Activated T-helper 2 cell treated with anti-CD3 and anti-CD28 coated beads, Interferon-gamma antibody, Interleukin-2, Interleukin-4, amounts not matched to agents 10 μg/mL and 5 μg/mL and 100 μg/mL, durations not matched to agents 14 hours and 24 hours and 36 hours (primary cell): ENCODE measurements at regions of chr5 and their contacts with region 1.

Region 1: GRCh38 chr5:113513384-113514288 is at the start of gene YTHDC2:
- DNase-seq: peak; percentile 82
- H3K4me3 Mint-ChIP-seq: peak within 1 kb of the TSS; percentile 87
- H3K27ac Mint-ChIP-seq: peak within 1 kb of the TSS; percentile 83
- H3K4me1 Mint-ChIP-seq: peaks cover 34% of the 10 kb centered on the region
- H3K27me3 Mint-ChIP-seq: peaks cover 15% of the 10 kb centered on the region
- total RNA-seq, gene YTHDC2: 23.1 and 23.9 TPM in 2 replicates

Region 2: DNA sequence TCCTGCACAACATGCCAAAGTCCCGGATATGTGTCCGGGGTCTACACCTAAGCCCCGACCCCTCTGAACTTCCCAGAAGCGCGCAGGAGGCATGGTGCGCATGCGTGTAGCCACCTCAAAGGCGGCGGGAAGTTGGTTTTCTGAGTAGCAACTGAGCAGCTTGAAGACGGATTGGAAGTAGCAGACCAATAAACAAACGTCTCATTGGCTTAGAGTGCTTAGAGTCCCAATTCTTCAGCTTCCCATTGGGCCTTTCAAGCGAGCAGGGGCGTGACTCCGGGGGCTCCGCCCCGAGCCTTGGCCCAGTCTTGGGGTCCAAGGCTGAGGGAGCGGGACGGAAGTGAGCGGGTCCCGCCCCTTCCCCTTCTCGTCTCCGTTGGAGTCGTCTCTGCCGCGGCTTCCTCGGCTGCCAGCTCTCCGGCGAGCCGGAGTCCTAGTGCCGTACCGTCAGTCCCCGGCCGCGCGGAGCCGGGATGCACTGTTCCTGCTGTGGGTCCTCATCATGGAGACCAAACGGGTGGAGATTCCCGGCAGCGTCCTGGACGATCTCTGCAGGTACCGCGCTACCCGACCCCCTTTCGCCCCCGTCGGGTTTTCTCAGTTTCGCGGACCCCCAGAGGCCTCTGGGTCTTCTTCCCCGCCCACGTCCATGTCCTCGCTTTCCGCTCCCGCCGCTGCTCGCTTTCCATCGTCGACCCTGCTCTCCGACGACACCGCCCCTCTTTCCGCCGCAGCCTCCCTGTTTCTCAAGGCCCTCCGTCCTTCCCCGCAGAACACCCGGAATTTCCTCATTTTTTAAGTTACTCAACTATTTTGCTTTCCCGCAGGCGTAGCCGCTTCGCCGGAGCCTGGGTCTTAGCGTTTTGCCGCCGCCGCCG is 537.0 kb before region 1 on chr5 and contains the start of gene DCP2:
- intact Hi-C with region 1: loop called (anchors 2 kb)
- DNase-seq: peak; percentile 96
- H3K4me3 Mint-ChIP-seq: peak within 1 kb of the TSS; percentile 99
- H3K27ac Mint-ChIP-seq: peak within 1 kb of the TSS; percentile 95
- H3K4me1 Mint-ChIP-seq: peaks cover 39% of the 10 kb centered on the region
- H3K27me3 Mint-ChIP-seq: no peaks in the 10 kb centered on the region
- total RNA-seq, gene DCP2: 81.6 and 84.1 TPM in 2 replicates

Region 3: DNA sequence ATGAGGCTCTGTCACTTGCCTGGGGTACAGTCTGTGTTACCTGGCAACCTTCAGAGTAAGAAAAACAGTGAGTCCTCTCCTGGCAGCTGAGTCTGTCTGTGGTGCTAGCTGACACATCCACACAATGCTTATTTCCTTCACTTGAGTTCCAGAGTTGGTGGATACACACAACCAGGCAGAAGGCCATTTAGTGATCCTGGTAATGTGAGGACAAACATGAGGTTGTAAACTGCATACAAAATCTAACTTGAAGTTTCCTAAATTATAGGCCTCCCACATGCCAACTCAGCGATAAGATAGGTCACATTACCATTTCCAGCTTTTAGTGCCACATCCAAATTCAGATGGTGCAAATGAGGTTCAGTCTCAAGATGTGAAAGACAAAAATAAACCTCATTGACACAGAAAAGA is 411.5 kb before region 1 on chr5:
- intact Hi-C with region 1: no loop called
- DNase-seq: no peak
- H3K4me3 Mint-ChIP-seq: no peak overlapping the region
- H3K27ac Mint-ChIP-seq: no peak overlapping the region
- H3K4me1 Mint-ChIP-seq: no peaks in the 10 kb centered on the region
- H3K27me3 Mint-ChIP-seq: peaks cover 2% of the 10 kb centered on the region

Region 4: GRCh38 chr5:113336975-113337374 is 176.7 kb before region 1 on chr5:
- intact Hi-C with region 1: loop called (anchors 2 kb)
- DNase-seq: no peak
- H3K4me3 Mint-ChIP-seq: no peak overlapping the region
- H3K27ac Mint-ChIP-seq: no peak overlapping the region
- H3K4me1 Mint-ChIP-seq: peaks cover 16% of the 10 kb centered on the region
- H3K27me3 Mint-ChIP-seq: peaks cover 22% of the 10 kb centered on the region

Region 5: DNA sequence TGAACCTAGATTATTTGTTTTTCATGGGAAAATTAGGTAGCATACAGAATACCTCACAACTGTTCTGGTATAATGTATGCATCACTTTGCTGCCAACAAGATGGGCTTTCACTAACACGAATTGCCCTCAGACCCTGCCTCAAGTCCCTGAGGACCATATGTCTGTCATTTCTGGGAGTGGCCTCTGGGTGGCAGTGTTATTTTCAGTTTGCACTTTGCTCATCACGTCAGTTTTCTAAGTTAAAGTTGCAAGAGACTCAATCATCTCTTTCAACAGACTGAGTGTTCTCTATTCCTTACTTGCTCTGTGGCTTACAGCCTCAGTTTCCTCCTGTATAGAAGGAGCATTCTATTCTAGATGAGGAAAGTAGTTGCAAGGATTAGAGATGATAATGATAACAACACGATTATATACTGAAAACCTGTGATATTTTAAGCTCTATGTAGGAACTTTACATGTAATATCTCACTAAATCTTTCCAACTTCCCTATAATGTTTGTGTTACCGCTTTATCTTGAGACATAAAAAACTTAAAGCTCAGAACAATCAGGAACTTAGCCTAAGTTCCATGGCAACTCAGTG is 134.6 kb before region 1 on chr5:
- intact Hi-C with region 1: loop called (anchors 2 kb)
- DNase-seq: peak; percentile 46
- H3K4me3 Mint-ChIP-seq: peak overlapping the region; percentile 3
- H3K27ac Mint-ChIP-seq: no peak overlapping the region
- H3K4me1 Mint-ChIP-seq: peaks cover 37% of the 10 kb centered on the region
- H3K27me3 Mint-ChIP-seq: peaks cover 25% of the 10 kb centered on the region

Region 6: DNA sequence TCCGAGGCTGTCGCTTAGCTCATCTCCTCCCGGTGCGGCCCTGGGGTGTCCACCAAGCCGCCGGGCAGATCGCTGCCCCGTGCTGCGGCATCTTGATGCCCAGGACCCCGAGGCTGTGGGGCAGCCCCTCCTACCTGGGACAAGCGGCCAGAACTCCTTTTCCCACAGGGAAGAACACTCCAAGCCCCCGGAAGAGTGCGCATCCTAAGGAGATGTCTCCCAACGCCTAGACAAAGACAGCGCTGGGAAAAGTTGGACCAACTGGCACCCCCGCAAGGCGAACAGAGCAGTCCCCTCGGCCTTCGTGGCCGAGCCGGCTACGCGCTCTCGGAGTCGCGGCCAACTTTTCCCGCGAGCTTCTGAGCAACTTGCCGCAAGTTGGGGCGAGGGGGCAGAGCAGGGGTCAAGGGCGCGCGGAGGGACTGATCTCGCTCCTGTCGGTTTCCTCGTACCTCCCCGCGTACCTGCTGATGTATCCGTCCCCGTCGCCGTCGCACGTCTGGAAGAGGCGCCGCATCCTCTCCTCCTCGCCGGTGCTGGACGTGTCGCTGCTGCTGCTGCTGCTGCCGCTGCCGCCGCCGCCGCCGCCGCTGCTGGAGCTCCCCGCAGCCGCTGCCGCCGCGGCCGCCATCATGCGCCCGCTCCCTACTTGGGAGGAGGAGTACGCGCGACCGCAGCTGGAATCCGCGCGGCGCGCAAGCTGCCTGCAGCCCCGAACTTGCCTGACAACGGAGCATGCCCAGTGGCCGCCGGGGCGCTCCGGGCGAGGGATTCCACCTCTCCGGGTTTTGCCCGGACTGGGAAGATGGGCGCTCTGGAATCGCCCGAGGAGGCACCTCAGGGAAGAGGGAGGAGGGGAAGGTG is 25.6 kb before region 1 on chr5 and contains the start of gene MCC:
- intact Hi-C with region 1: loop called (anchors 2 kb)
- DNase-seq: no peak
- H3K4me3 Mint-ChIP-seq: peak within 1 kb of the TSS; percentile 76
- H3K27ac Mint-ChIP-seq: no peak within 1 kb of the TSS
- H3K4me1 Mint-ChIP-seq: peaks cover 21% of the 10 kb centered on the region
- H3K27me3 Mint-ChIP-seq: peaks cover 80% of the 10 kb centered on the region
- total RNA-seq, gene MCC: 1.6 and 2.1 TPM in 2 replicates

Region 7: GRCh38 chr5:113524927-113525326 is 11.3 kb after region 1 on chr5:
- intact Hi-C with region 1: loop called (anchors 2 kb)
- DNase-seq: no peak
- H3K4me3 Mint-ChIP-seq: peak overlapping the region; percentile 17
- H3K27ac Mint-ChIP-seq: peak overlapping the region; percentile 33
- H3K4me1 Mint-ChIP-seq: peaks cover 28% of the 10 kb centered on the region
- H3K27me3 Mint-ChIP-seq: no peaks in the 10 kb centered on the region